Panc1 (cell line): ENCODE measurements at regions of chr7 and their contacts with region 1.

Region 1: DNA sequence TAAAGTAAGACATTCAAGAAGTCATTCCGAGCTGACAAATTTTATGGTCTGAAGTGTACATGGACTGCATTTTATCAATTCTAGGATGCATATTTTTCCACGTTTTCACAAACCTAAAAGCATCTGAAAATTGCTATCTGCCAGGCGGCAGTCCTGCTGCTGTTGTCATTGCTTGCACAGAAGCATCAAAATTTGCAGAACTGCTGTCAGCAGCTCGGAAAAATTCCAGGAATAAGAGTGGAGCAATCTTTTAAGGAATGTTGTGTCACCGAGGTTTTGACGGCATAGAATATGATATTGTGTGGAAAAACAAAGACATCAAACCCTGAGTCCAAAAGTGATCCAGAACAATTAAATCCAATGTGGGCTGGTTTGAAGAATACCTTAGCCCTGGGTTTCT is 61.4 kb downstream of the CHCHD3 start:
- DNase-seq: no peak
- ATAC-seq: no peak
- H3K4me3 ChIP-seq: no peak overlapping the region
- H3K27ac ChIP-seq: no peak overlapping the region
- H3K4me1 ChIP-seq: no peaks in the 10 kb centered on the region
- H3K27me3 ChIP-seq: no peaks in the 10 kb centered on the region
- CTCF ChIP-seq: no peak

Region 2: DNA sequence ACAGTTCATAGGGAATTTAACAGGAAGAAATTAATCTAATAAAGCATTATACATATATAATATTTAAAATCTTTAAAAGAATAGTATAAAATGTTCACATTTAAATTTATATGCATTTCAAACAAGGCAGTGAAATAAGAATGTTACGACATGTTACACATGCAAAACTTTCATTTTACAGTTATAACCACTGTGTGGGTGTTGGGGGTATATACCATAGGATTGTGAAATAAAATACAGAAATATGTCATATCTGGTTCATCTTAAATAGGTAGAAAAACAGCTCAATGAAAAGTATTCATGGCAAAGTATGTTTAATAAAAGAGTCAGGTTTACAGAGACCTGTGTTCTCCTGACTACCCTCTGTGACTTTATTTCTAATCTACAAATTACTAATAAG is 15.8 kb after region 1 on chr7:
- CTCF ChIA-PET with region 1: interaction called, 18 read pairs
- POLR2A ChIA-PET with region 1: no interaction called
- in situ Hi-C with region 1: no loop called
- intact Hi-C with region 1: no loop called
- DNase-seq: no peak
- ATAC-seq: no peak
- H3K4me3 ChIP-seq: no peak overlapping the region
- H3K27ac ChIP-seq: no peak overlapping the region
- H3K4me1 ChIP-seq: no peaks in the 10 kb centered on the region; the same call in 1 of the 2 replicates
- H3K27me3 ChIP-seq: no peaks in the 10 kb centered on the region
- CTCF ChIP-seq: no peak